ENCODE measurements at regions of chr15 and their contacts with region 1.

Region 1: GRCh38 chr15:58038426-58039078 is 27.0 kb downstream of the ALDH1A2 start:
- DNase-seq: peak; percentile 96
- ATAC-seq: peak; percentile 72
- H3K4me3 ChIP-seq: no peak overlapping the region
- H3K27ac ChIP-seq: peak overlapping the region; percentile 80
- H3K4me1 ChIP-seq: peaks cover 47% of the 10 kb centered on the region
- H3K27me3 ChIP-seq: no peaks in the 10 kb centered on the region
- CTCF ChIP-seq: no peak

Region 2: GRCh38 chr15:56192659-56193442 is 1845.7 kb before region 1 on chr15:
- CTCF ChIA-PET with region 1: no interaction called
- POLR2A ChIA-PET with region 1: no interaction called
- intact Hi-C with region 1: no loop called
- DNase-seq: no peak
- ATAC-seq: no peak
- H3K4me3 ChIP-seq: no peak overlapping the region
- H3K27ac ChIP-seq: no peak overlapping the region
- H3K4me1 ChIP-seq: no peaks in the 10 kb centered on the region
- H3K27me3 ChIP-seq: no peaks in the 10 kb centered on the region
- CTCF ChIP-seq: no peak

Region 3: DNA sequence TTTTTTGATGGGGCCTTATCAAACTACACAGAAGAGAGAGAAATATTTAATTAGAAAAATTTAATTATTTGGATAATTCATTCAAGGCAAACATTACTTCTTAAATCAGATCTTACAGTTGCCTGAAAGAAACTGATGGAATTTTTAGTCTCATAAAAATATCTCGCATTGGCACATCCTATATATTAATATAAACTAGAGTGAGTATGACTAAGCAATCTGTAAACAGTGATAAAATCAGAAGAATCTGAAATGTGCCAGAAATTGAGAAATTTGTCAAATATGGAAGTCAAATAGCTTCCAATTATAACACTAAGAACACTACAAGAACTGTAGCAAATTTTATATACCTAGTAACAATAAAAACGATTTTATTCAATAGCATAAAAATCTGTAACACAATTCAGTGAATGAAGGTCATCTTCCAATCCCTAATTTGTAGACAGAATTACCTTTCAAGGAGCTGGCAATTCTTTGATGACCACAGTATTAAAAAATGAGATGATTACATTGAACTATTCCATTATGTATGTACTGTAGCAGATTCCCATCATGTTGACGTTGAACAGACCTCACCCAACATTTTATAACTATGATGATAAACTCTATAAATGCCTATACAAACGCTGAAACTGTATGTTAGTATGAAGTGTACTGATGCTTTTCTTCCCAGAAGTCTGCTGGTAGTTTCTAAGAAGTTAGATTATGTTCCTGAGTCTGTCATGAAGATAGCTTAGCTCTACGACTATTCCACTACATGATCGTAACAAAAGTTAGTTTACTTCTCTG is 36.0 kb before region 1 on chr15:
- CTCF ChIA-PET with region 1: no interaction called
- POLR2A ChIA-PET with region 1: no interaction called
- intact Hi-C with region 1: loop called (anchors 2 kb)
- DNase-seq: peak; percentile 32
- ATAC-seq: peak; percentile 88
- H3K4me3 ChIP-seq: no peak overlapping the region
- H3K27ac ChIP-seq: no peak overlapping the region; the same call in 1 of the 2 replicates
- H3K4me1 ChIP-seq: no peaks in the 10 kb centered on the region; the same call in 1 of the 2 replicates
- H3K27me3 ChIP-seq: 0 out of 2 replicates have a peak, but pooled peaks cover 3% of the 10 kb centered on the region
- CTCF ChIP-seq: no peak

Region 4: GRCh38 chr15:58056015-58056414 is 17.5 kb after region 1 on chr15:
- CTCF ChIA-PET with region 1: no interaction called
- POLR2A ChIA-PET with region 1: no interaction called
- intact Hi-C with region 1: loop called (anchors 2 kb)
- DNase-seq: no peak
- ATAC-seq: no peak
- H3K4me3 ChIP-seq: no peak overlapping the region
- H3K27ac ChIP-seq: no peak overlapping the region
- H3K4me1 ChIP-seq: peaks cover 9% of the 10 kb centered on the region
- H3K27me3 ChIP-seq: peaks cover 3% of the 10 kb centered on the region; the same call in 1 of the 2 replicates
- CTCF ChIP-seq: peak; percentile 47